ENCODE measurements at regions of chr6 and their contacts with region 1.

Region 1: GRCh38 chr6:30656513-30656912 is 9.6 kb downstream of the C6orf136 start:
- DNase-seq: no peak
- H3K4me3 ChIP-seq: no peak overlapping the region
- H3K27ac ChIP-seq: no peak overlapping the region
- H3K4me1 ChIP-seq: no peaks in the 10 kb centered on the region
- H3K27me3 ChIP-seq: no peaks in the 10 kb centered on the region
- CTCF ChIP-seq: no peak

Region 2: GRCh38 chr6:30678964-30679726 is 22.6 kb after region 1 on chr6:
- CTCF ChIA-PET with region 1: no interaction called
- POLR2A ChIA-PET with region 1: interaction called, 34 read pairs
- intact Hi-C with region 1: no loop called
- DNase-seq: peak in 1 of 2 experiments; percentile 74
- H3K4me3 ChIP-seq: no peak overlapping the region
- H3K27ac ChIP-seq: no peak overlapping the region
- H3K4me1 ChIP-seq: peaks cover 30% of the 10 kb centered on the region
- H3K27me3 ChIP-seq: no peaks in the 10 kb centered on the region
- CTCF ChIP-seq: peak; percentile 94